ENCODE measurements at regions of chr18 and their contacts with region 1.

Region 1: DNA sequence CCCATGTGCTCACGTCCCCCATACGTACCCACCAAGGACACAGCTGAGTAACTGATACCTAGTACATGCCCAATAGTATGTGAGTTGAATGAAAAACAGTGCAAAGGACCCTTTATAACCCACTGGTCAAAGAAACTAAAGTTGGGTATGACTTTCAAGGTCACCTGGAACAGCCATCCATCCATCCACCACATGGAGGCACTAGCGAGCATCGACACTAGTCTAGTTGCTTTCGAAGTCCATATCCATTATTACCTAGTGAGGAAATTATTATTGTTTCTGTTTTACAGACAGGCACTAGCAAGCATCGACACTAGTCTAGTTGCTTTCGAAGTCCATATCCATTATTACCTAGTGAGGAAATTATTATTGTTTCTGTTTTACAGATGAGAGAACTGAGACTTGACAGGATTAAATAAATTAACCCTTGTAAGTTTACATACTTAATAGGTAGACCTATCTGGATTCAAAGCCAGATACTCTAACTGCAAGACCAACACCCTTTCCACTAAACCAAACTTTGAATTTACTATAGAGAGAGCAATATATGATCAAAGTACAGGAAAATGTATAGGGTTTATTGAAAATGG is 233.7 kb downstream of the METTL4 start:
- DNase-seq: peak in 1 of 2 experiments; percentile 67
- H3K4me3 ChIP-seq: no peak overlapping the region
- H3K27ac ChIP-seq: no peak overlapping the region
- H3K4me1 ChIP-seq: no peaks in the 10 kb centered on the region
- H3K27me3 ChIP-seq: no peaks in the 10 kb centered on the region
- CTCF ChIP-seq: peak; percentile 61 to 72 (median 64)
- EP300 ChIP-seq: no peak
- POLR2A ChIP-seq: no peak
- RAD21 ChIP-seq: peak; percentile 55 to 66

Region 2: DNA sequence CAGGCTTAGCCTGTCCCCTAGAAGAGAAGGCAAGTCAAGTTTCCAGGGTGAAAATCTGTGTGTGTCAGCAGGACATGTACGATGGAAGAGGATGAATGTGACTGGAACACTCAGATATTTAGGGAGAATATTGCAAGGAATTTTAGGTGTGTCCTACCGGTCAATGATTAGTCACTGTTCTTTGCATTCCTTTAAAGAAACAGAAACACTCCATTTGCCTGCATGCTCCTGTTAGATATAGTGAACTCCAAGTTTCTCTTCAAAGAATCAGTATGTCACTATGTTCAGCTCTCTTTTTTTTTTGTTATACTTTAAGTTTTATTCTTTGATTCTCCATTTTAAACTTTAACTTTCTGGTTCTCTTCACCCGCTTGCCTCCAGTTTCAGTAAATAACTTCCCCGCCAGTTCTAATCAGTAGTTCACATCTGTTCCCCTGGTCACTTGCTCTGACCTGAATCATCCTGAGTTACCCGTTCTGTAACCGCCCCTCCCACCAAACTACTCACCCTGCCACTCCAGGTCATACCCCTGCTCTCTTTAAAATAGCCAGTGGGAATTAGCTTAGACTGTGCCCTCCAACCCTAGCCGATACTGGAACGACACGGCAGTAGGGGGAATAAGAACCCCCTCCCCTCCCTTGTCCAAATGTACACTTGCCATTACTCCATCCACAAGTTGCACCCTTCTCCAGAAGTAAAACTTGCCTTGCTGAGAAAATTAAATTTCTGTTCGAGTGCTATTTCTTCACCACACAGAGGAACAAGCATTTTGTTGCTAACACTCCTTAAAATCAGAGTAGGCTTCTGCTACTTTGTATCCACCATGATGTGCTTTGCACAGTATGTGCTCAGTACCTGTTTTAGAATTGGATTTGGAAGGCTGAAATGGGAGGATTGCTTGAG is 34.8 kb before region 1 on chr18:
- CTCF ChIA-PET with region 1: no interaction called
- POLR2A ChIA-PET with region 1: no interaction called
- DNase-seq: no peak
- H3K4me3 ChIP-seq: no peak overlapping the region
- H3K27ac ChIP-seq: no peak overlapping the region
- H3K4me1 ChIP-seq: no peaks in the 10 kb centered on the region
- H3K27me3 ChIP-seq: no peaks in the 10 kb centered on the region
- CTCF ChIP-seq: no peak
- EP300 ChIP-seq: no peak
- POLR2A ChIP-seq: no peak
- RAD21 ChIP-seq: no peak

Region 3: GRCh38 chr18:2325308-2325849 is 12.3 kb before region 1 on chr18:
- CTCF ChIA-PET with region 1: interaction called, 25 read pairs
- POLR2A ChIA-PET with region 1: no interaction called
- DNase-seq: no peak
- H3K4me3 ChIP-seq: no peak overlapping the region
- H3K27ac ChIP-seq: no peak overlapping the region
- H3K4me1 ChIP-seq: no peaks in the 10 kb centered on the region
- H3K27me3 ChIP-seq: no peaks in the 10 kb centered on the region
- CTCF ChIP-seq: no peak
- EP300 ChIP-seq: no peak
- POLR2A ChIP-seq: no peak
- RAD21 ChIP-seq: no peak

Region 4: GRCh38 chr18:2471523-2471922 is 133.9 kb after region 1 on chr18:
- CTCF ChIA-PET with region 1: no interaction called
- POLR2A ChIA-PET with region 1: no interaction called
- DNase-seq: no peak
- H3K4me3 ChIP-seq: no peak overlapping the region
- H3K27ac ChIP-seq: no peak overlapping the region
- H3K4me1 ChIP-seq: no peaks in the 10 kb centered on the region
- H3K27me3 ChIP-seq: no peaks in the 10 kb centered on the region
- CTCF ChIP-seq: peak; percentile 26 to 53 (median 42)
- EP300 ChIP-seq: no peak
- POLR2A ChIP-seq: no peak
- RAD21 ChIP-seq: peak; percentile 7 to 41; a peak in 2 of 4 replicates

Region 5: DNA sequence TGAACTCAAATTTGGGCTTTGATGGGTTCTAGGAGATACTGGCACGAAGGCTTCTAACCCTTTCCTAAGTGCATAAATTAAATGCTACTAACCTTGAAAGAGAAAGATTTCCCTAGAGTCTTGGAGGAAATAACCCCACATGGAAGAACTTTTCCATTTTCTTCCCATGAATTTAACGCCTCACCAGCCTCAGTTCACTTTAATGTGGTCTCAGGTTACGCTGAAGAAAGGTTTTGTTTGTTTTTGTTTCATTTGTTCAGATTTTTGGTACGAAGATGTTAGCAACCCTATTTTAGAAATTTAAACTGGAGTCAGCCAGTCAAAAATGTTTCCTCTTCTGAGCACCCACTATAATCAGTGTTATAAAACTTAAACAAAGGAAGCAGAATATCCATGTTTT is 202.9 kb after region 1 on chr18:
- CTCF ChIA-PET with region 1: interaction called, 53 read pairs
- POLR2A ChIA-PET with region 1: no interaction called
- DNase-seq: no peak
- H3K4me3 ChIP-seq: no peak overlapping the region
- H3K27ac ChIP-seq: no peak overlapping the region
- H3K4me1 ChIP-seq: no peaks in the 10 kb centered on the region
- H3K27me3 ChIP-seq: no peaks in the 10 kb centered on the region
- CTCF ChIP-seq: no peak
- EP300 ChIP-seq: no peak
- POLR2A ChIP-seq: no peak
- RAD21 ChIP-seq: no peak

Region 6: GRCh38 chr18:2547477-2548087 is 209.9 kb after region 1 on chr18:
- CTCF ChIA-PET with region 1: interaction called, 53 read pairs
- POLR2A ChIA-PET with region 1: no interaction called
- DNase-seq: no peak
- H3K4me3 ChIP-seq: no peak overlapping the region
- H3K27ac ChIP-seq: no peak overlapping the region
- H3K4me1 ChIP-seq: no peaks in the 10 kb centered on the region
- H3K27me3 ChIP-seq: no peaks in the 10 kb centered on the region
- CTCF ChIP-seq: peak in 1 of 3 experiments; percentile 37; a peak in 2 of 4 replicates
- EP300 ChIP-seq: no peak
- POLR2A ChIP-seq: no peak
- RAD21 ChIP-seq: peak; percentile 45 to 60

Measured in H1 (cell line).